ENCODE measurements at regions of chr1 and their contacts with region 1.

Region 1: DNA sequence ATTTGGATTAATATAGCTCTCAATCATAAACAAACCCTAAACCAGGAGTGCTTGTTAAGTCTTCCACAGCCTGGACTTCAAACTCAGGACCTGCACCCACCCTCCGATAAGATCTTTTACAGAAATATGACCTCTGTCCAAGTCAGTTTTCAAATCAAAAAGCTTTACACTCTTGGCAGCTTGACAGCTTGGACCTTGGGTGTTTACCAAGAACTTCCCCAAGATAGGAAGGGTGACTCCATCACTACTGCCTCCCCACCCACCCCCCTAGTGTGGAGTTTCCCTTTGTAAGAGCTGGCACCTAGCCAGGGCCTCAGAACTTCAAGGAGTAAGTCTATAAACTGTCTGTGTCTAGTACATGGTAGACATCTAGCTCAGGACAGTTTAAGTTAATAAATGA is 9.6 kb downstream of the BCAR3 start:
- DNase-seq: no peak
- H3K4me3 ChIP-seq: no peak overlapping the region
- H3K27ac ChIP-seq: no peak overlapping the region
- H3K4me1 ChIP-seq: peaks cover 0 to 2% (median 2%) of the 10 kb centered on the region in 4 experiments; a peak in 4 of 7 replicates
- H3K27me3 ChIP-seq: no peaks in the 10 kb centered on the region
- CTCF ChIP-seq: no peak
- EP300 ChIP-seq: no peak
- POLR2A ChIP-seq: no peak
- RAD21 ChIP-seq: no peak

Region 2: GRCh38 chr1:93542398-93542797 is 129.7 kb before region 1 on chr1:
- CTCF ChIA-PET with region 1: no interaction called
- POLR2A ChIA-PET with region 1: no interaction called
- DNase-seq: no peak
- H3K4me3 ChIP-seq: no peak overlapping the region
- H3K27ac ChIP-seq: no peak overlapping the region
- H3K4me1 ChIP-seq: no peaks in the 10 kb centered on the region
- H3K27me3 ChIP-seq: no peaks in the 10 kb centered on the region
- CTCF ChIP-seq: no peak
- EP300 ChIP-seq: no peak
- POLR2A ChIP-seq: no peak
- RAD21 ChIP-seq: no peak

Region 3: GRCh38 chr1:93552741-93553455 is 119.2 kb before region 1 on chr1:
- CTCF ChIA-PET with region 1: no interaction called
- POLR2A ChIA-PET with region 1: no interaction called
- DNase-seq: no peak
- H3K4me3 ChIP-seq: no peak overlapping the region
- H3K27ac ChIP-seq: no peak overlapping the region
- H3K4me1 ChIP-seq: peaks cover 0 to 8% (median 5%) of the 10 kb centered on the region in 4 experiments; a peak in 3 of 7 replicates
- H3K27me3 ChIP-seq: no peaks in the 10 kb centered on the region
- CTCF ChIP-seq: no peak
- EP300 ChIP-seq: no peak
- POLR2A ChIP-seq: no peak
- RAD21 ChIP-seq: no peak

Region 4: DNA sequence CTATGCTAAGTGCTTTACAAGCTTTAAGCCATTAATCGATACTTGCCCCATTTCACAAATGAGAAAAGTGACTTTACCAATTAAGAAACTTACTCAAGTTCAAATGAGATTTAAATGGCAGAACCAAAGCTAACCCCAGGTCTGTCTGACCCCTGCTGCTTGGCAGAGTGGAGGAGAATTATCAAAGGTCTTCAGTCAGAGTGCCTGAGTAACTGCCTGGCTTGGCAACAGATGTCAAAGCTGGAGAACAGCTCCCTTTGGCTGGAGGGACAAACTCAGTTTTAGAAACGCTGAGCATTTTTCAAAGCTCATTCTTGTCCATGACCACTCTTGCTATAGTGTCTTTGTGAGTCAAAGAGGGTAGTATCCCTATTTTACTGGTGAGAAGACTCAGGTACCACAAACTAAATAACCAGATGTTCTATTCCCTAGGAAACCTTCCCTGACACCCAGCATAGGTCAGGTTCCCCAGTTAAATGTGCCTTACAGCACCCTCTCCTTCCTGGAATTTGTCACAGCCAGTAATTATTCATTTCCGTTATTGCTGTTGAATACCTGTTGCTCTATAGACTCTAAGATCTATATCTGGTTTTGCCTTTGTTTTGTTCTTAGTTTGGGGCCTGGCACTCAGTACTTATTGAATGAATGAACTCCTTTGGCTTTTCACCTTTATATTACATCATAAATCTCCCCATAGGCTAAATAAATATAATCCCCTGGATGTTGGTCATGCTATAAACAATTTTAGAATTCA is 14.6 kb after region 1 on chr1:
- CTCF ChIA-PET with region 1: interaction called, 15 read pairs
- POLR2A ChIA-PET with region 1: interaction called, 3 read pairs
- DNase-seq: no peak
- H3K4me3 ChIP-seq: no peak overlapping the region
- H3K27ac ChIP-seq: no peak overlapping the region
- H3K4me1 ChIP-seq: peaks cover 0 to 6% (median 2%) of the 10 kb centered on the region in 4 experiments; a peak in 5 of 7 replicates
- H3K27me3 ChIP-seq: peaks cover 0 to 8% (median 2%) of the 10 kb centered on the region in 4 experiments; a peak in 3 of 7 replicates
- CTCF ChIP-seq: no peak
- EP300 ChIP-seq: no peak
- POLR2A ChIP-seq: no peak
- RAD21 ChIP-seq: no peak

Measured in H1 (cell line).